Activated CD4-positive, alpha-beta T cell treated with anti-CD3 and anti-CD28 coated beads for 36 hours (primary cell): ENCODE measurements at regions of chr17 and their contacts with region 1.

Region 1: DNA sequence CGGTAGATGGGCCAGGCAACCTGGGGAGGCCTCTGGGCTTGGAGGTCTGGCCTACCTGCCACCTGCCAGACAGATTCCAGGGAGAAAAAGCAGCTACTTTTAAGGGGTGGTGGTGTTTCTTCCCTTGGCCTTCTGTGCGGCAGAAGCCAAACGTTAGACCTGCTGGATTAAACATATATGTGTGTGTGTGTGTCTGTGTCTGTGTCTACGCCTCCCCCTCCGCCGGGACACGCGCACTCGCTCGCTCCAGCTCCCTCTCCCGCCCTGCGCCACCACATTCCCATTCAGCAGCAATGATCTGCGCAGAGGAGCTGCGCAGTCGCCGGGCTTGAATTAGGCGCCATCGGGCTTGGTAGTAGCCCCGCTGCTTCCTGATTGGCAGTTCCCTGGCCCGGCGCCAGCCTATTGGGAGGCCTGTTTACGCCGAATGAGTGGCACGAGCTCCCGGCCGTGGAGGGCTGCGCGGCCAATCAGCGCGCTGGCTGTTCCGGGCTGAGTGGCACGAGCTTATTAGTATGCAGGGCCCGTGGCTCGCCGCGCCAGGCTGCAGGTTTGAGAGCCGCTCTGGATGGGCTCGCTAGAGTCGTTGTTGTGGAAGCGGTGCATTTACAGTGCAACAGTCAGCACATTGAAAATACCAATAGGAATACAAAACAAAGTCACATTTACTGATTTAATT is at the start of gene BAHCC1:
- DNase-seq: peak; percentile 97
- ATAC-seq: peak; percentile 92
- H3K4me3 Mint-ChIP-seq: peak within 1 kb of the TSS; percentile 46
- H3K27ac Mint-ChIP-seq: peak within 1 kb of the TSS; percentile 39
- H3K4me1 Mint-ChIP-seq: peaks cover 24% of the 10 kb centered on the region
- H3K27me3 Mint-ChIP-seq: peaks cover 51% of the 10 kb centered on the region
- total RNA-seq, gene BAHCC1: 0.05 TPM in 1 of 2 experiments, not detected in the other

Region 2: DNA sequence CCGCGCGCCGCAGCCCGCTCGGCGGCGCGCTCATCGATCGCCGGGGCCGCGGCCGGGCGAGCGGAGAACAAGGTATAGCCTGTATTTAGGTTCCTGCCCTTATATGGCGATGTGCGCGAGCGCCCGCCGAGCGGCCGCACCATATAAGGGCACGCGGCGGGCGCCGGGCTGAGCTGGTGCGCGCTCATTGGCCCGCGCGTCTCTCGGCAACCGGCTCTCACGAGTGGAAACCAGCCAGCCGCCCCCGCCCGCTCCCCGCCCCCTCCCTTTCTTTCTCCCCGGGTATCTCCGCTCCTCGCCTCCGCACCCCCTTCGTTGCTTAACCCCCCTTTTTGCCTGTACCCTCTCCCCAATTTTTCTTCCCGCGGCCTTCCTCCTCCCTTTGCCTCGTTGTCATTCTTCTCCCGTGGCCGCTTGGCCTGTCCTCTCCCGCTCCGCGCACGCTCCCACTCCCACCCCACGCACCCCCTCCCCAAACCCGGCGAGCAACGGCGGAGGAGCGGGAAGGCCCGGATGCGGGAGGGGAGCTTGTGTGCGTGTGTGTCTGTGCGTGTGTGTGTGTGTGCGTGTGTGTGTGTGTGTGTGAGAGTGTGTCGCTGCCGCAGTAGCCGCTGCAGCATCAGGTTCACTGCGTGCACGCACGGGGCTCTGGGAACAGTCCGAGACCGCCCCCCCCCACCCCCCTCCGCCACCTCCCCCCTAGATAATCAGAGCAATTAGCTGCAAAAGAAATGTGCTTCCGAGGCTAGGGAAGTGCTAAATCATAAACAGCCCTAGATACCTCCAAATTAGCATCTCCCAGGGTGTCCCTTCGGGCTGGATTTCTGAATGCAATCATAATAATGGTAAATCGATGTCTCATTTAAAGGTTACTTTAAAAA is 1584.7 kb before region 1 on chr17:
- CTCF ChIA-PET with region 1: no interaction called
- POLR2A ChIA-PET with region 1: no interaction called
- intact Hi-C with region 1: loop called in 1 of 2 experiments (anchors 10 kb)
- DNase-seq: peak; percentile 90
- ATAC-seq: peak; percentile 90
- H3K4me3 Mint-ChIP-seq: peak overlapping the region; percentile 18
- H3K27ac Mint-ChIP-seq: no peak overlapping the region
- H3K4me1 Mint-ChIP-seq: peaks cover 39% of the 10 kb centered on the region
- H3K27me3 Mint-ChIP-seq: peaks cover 59% of the 10 kb centered on the region

Region 3: DNA sequence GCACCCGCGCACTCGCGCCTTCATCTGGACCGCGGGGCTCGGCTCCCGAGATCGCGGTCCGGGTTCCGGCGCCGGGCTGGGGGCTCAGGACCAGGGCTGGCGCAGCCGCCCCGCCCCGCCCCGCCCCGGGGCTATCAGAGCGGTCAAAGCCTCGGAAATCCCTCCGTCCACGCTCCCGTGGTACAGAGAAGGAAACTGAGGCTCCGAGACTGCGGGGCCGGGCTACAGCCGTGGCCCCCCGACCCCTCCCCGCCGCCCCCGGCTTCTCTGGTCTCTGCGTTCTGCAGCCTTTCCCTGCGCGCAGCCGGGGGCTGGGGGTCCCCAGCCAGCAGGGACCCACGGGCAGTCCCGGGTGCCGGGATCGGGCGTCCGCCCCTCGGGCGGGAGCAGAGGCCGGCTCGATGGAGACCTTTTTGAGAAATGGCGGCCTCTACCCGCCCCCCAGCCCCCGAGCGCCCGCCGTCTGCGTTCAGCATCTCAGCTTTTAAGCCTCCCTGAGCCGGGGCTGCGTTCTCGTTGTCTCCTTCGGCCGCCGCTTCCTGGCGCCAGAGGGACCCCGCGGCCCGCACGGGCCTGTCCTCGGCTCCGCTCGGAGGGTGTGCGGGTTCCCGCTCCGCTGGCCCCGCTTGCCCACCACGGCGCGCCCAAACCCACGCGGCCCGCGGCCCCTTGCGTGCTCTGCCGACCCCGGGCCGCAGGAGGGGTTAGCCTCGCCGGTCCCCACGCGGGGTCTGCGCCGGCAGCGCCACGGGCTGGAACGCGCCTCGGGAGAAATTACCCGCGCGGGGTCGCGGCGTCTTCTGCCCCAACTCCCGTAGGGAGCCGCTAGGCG is 917.2 kb before region 1 on chr17:
- CTCF ChIA-PET with region 1: no interaction called
- POLR2A ChIA-PET with region 1: no interaction called
- intact Hi-C with region 1: loop called in 1 of 2 experiments (anchors 10 kb)
- DNase-seq: peak; percentile 73
- ATAC-seq: peak; percentile 55
- H3K4me3 Mint-ChIP-seq: no peak overlapping the region
- H3K27ac Mint-ChIP-seq: no peak overlapping the region
- H3K4me1 Mint-ChIP-seq: peaks cover 13% of the 10 kb centered on the region
- H3K27me3 Mint-ChIP-seq: peaks cover 49% of the 10 kb centered on the region

Region 4: GRCh38 chr17:81294856-81295680 is 100.0 kb before region 1 on chr17 and contains the start of gene SLC38A10:
- CTCF ChIA-PET with region 1: no interaction called
- POLR2A ChIA-PET with region 1: no interaction called
- intact Hi-C with region 1: loop called in 1 of 2 experiments (anchors 1 kb)
- DNase-seq: peak; percentile 95
- ATAC-seq: peak; percentile 91
- H3K4me3 Mint-ChIP-seq: peak within 1 kb of the TSS; percentile 89
- H3K27ac Mint-ChIP-seq: peak within 1 kb of the TSS; percentile 96
- H3K4me1 Mint-ChIP-seq: peaks cover 36% of the 10 kb centered on the region
- H3K27me3 Mint-ChIP-seq: no peaks in the 10 kb centered on the region
- total RNA-seq, gene SLC38A10: 47.6 to 52.9 TPM

Region 5: GRCh38 chr17:81346090-81346907 is 48.8 kb before region 1 on chr17:
- CTCF ChIA-PET with region 1: no interaction called
- POLR2A ChIA-PET with region 1: no interaction called
- intact Hi-C with region 1: loop called in 1 of 2 experiments (anchors 1 kb)
- DNase-seq: peak; percentile 98
- ATAC-seq: peak; percentile 93
- H3K4me3 Mint-ChIP-seq: peak overlapping the region; percentile 26
- H3K27ac Mint-ChIP-seq: no peak overlapping the region
- H3K4me1 Mint-ChIP-seq: peaks cover 19% of the 10 kb centered on the region
- H3K27me3 Mint-ChIP-seq: peaks cover 25% of the 10 kb centered on the region

Region 6: DNA sequence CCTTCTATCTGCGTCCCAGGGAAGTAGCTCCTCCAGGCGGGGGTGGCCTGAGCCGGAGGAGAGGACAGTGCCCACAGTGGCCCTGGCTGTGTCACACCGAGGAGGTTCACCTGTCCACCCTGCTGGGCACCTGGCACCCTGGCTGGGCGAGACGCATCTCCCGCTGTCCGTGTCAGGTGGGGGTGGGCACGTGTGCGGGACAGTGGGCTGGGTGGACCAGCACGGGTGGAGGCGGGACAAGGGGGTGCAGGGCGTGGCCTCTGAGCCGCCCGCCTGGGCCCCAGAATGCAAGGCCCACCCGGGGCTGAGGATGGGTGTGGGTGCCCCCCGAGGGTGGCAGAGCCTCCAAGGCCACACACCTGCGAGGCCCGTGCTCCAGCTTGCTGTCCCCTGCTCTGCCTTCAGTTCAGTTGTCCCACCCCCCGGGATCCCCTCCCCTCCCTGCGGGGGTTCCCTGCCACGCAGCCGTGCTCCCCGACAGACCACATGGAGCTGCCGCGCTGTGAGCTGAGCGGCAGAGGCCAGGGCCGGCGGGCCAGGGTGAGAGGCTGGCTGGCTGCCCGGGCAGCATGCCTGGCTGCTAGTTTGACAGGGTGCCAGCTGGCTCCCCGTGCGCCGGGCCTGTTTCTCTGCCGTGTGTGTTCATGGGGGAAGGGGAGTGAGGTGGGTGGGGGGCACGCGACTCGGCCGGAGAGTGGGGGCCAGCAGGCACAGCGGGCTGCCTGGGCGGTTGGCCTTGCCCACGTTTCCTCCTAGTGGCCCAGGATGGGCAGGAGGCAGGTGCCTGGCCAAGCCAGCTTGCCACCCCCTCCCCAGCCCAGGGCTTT is 34.1 kb after region 1 on chr17:
- CTCF ChIA-PET with region 1: no interaction called
- POLR2A ChIA-PET with region 1: no interaction called
- intact Hi-C with region 1: loop called in 1 of 2 experiments (anchors 2 kb)
- DNase-seq: no peak
- ATAC-seq: no peak
- H3K4me3 Mint-ChIP-seq: no peak overlapping the region
- H3K27ac Mint-ChIP-seq: no peak overlapping the region
- H3K4me1 Mint-ChIP-seq: peaks cover 6% of the 10 kb centered on the region
- H3K27me3 Mint-ChIP-seq: peaks cover 16% of the 10 kb centered on the region

Region 7: DNA sequence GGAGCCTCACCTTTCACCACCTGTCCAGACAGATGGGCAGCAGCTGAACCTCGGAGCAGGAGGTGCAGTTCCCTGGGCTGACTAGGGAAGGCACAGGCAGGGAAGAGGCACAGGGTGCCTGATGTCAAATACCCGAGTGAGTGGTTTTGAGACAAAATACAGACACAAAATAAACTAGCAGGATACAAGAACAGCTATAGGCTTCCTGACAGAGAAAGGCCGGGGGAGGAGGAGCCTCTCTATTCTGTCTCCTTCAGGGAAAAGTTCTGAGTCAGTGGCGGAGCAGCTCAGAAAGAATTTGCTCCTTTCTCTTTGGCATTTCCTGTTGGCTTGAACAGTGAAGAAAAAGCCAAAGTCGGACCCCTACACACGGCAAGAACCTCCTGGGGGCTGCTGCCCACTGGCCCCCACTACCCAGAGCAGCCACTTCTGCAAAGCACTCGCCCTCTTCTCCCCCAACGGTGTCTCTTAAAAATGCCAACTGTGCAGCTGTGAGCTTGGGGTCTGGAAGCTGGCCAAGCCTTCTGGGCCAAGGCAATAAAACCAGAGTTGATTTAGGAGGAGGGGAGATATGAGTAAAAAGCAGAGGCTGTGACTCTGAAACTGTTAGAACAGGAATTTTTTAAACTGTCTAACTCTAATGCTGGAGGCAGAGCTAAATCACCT is 171.5 kb after region 1 on chr17:
- CTCF ChIA-PET with region 1: no interaction called
- POLR2A ChIA-PET with region 1: no interaction called
- intact Hi-C with region 1: no loop called
- DNase-seq: no peak
- ATAC-seq: no peak
- H3K4me3 Mint-ChIP-seq: no peak overlapping the region
- H3K27ac Mint-ChIP-seq: no peak overlapping the region
- H3K4me1 Mint-ChIP-seq: no peaks in the 10 kb centered on the region
- H3K27me3 Mint-ChIP-seq: no peaks in the 10 kb centered on the region

Region 8: DNA sequence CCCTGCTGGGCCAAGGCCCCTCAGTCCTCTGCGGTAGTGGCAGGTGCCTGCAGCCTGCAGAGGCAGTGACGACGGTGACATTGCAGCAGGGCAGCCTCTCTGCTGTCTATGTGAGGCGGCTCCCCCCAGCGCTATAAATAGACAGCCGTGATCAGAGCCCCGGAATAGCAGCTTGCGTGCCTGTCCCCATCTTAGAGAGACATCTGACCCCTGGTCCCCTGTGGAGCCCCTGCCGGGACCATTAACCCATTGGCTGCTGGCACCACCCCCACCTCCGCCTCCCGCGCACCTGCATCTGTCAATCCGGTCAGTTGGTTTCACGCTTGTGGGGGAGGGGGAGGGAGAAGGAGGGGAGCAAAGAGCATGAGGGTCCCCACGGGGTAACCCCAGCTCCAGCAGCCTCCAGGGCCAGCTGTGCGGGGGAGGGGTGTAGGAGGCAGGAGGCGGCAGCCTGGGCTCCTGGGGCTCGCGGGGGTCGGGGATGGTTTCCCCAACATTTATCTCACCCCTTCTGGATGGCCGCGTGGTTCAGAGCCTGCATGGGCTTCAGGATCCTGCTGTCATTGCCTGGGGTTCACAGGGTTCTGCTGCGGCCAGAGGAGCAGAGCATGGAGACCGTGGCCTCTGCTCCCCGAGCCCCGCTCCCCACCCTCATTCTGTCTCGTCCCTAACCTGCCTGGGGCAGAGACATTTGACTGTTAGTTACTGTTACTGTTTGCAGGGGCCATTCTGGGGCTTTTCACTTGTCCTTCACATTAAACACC is 546.9 kb after region 1 on chr17:
- CTCF ChIA-PET with region 1: no interaction called
- POLR2A ChIA-PET with region 1: interaction called, 10 read pairs
- intact Hi-C with region 1: no loop called
- DNase-seq: no peak
- ATAC-seq: no peak
- H3K4me3 Mint-ChIP-seq: no peak overlapping the region
- H3K27ac Mint-ChIP-seq: no peak overlapping the region
- H3K4me1 Mint-ChIP-seq: peaks cover 5% of the 10 kb centered on the region
- H3K27me3 Mint-ChIP-seq: peaks cover 5% of the 10 kb centered on the region